ENCODE measurements at regions of chr4 and their contacts with region 1.

Region 1: GRCh38 chr4:77465271-77465670 is 140.3 kb upstream of the CXCL13 start:
- DNase-seq: no peak
- H3K4me3 Mint-ChIP-seq: no peak overlapping the region
- H3K27ac Mint-ChIP-seq: no peak overlapping the region
- H3K4me1 Mint-ChIP-seq: no peaks in the 10 kb centered on the region
- H3K27me3 Mint-ChIP-seq: peaks cover 7% of the 10 kb centered on the region

Region 2: DNA sequence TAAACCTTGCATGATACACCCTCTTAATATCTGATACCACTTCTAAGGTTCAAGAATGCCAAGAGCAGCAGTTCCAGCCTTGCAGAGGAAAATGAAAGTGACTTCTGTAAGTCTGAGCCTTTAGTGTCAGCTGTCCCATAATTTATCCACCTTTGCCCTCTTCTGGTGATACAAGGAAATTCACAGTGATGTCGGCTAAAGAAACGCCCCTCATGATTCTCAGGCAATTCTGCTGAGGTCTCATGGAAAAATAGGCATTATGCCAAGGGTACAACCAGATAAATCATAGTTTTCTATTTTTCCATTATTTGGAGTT is 31.9 kb before region 1 on chr4:
- CTCF ChIA-PET with region 1: interaction called, 10 read pairs
- POLR2A ChIA-PET with region 1: no interaction called
- DNase-seq: peak; percentile 52
- H3K4me3 Mint-ChIP-seq: no peak overlapping the region
- H3K27ac Mint-ChIP-seq: no peak overlapping the region
- H3K4me1 Mint-ChIP-seq: peaks cover 8% of the 10 kb centered on the region
- H3K27me3 Mint-ChIP-seq: no peaks in the 10 kb centered on the region

Region 3: DNA sequence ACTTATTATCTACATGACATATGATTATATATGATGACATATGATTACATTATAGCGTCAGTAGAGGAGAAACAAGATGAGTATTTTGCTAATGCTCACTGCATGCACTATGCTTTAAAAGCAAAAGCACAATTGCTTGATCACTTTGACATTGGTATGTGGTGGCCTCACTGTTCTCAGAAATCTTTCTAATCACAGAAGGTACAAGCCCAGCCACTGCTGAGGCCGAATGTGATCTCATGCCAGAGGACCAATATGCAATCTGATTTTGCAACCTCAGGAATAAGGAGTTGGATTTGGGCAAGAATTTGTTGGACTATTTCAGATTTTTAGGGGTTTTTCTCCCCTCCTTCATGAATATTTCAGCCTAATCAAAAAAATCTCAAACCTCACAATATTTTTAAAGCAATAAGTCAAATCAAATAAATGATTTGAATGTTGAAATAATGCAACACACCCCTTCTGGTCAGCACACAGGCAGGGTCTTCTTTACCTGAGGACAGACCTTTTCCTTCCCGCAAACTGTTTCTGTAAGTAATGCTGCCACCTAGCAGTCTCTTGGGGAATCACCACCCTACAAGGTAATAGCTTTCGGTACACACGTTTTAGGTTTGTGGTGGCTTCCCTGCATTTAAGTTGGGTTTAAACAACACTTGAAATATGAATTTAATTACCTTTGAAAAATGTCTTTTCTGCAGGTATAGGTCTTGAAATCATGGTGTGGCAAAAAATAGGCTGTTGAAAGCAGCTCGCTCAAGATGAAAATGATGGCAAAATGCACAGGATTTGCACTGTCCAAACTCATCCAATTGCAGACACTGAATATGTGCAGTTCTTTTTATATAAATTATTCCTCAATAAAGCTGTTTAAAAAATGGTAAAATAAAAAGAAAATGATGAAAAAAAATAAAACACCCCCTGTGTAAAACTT is 135.5 kb after region 1 on chr4:
- CTCF ChIA-PET with region 1: interaction called, 13 read pairs
- POLR2A ChIA-PET with region 1: no interaction called
- DNase-seq: peak; percentile 44
- H3K4me3 Mint-ChIP-seq: no peak overlapping the region
- H3K27ac Mint-ChIP-seq: no peak overlapping the region
- H3K4me1 Mint-ChIP-seq: peaks cover 12% of the 10 kb centered on the region
- H3K27me3 Mint-ChIP-seq: peaks cover 4% of the 10 kb centered on the region

Measured in activated CD4-positive, alpha-beta T cell treated with anti-CD3 and anti-CD28 coated beads, Interleukin-2, amount 10 ng/mL, durations not matched to agents 7 days and 5 days (primary cell).